ENCODE measurements at regions of chr13 and their contacts with region 1.

Region 1: GRCh38 chr13:50788551-50789210 is 54.8 kb downstream of the DLEU7 start:
- DNase-seq: no peak
- ATAC-seq: no peak
- H3K4me3 ChIP-seq: no peak overlapping the region
- H3K27ac ChIP-seq: no peak overlapping the region
- H3K4me1 ChIP-seq: peaks cover 0 to 5% (median 0%) of the 10 kb centered on the region in 12 donors
- H3K27me3 ChIP-seq: no peaks in the 10 kb centered on the region
- CTCF ChIP-seq: no peak
- POLR2A ChIP-seq: no peak

Region 2: DNA sequence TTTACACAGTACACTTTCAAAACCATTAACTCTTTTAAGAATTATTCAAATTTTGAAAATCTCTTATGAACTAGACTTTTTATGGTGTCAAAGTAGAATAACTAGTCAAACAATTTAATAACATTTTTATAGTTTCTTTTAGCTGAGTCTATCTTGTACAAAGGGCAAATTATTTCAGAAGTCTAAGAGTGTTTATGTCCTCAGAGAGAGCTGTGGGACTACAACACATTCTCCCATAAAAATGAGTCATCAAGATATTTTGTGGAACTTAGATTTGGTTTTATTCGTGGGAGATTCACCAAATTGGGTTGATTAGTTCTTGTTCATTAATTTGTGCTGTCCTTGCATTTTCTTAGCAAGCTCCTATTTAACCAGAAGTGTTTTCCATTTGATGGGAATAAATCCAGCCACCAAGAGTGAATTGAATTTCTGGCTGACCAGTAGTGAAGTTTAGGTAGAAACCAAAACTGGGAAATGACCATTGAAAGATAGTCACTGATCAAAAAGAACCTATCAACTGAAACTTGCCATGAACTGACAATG is 236.2 kb before region 1 on chr13:
- intact Hi-C with region 1: loop called in 1 of 10 experiments (anchors 10 kb)
- DNase-seq: no peak
- ATAC-seq: no peak
- H3K4me3 ChIP-seq: no peak overlapping the region
- H3K27ac ChIP-seq: no peak overlapping the region
- H3K4me1 ChIP-seq: peaks cover 0 to 11% (median 0%) of the 10 kb centered on the region in 12 donors
- H3K27me3 ChIP-seq: no peaks in the 10 kb centered on the region
- CTCF ChIP-seq: no peak
- POLR2A ChIP-seq: no peak

Measured in heart left ventricle (tissue), 16 donors.